Activated CD4-positive, alpha-beta T cell treated with anti-CD3 and anti-CD28 coated beads, Interleukin-2, amount 10 ng/mL, durations not matched to agents 7 days and 5 days (primary cell): ENCODE measurements at regions of chr11 and their contacts with region 1.

Region 1: GRCh38 chr11:65027213-65028067 is at the start of gene SNX15:
- DNase-seq: peak; percentile 96
- H3K4me3 Mint-ChIP-seq: peak within 1 kb of the TSS; percentile 78
- H3K27ac Mint-ChIP-seq: peak within 1 kb of the TSS; percentile 93
- H3K4me1 Mint-ChIP-seq: peaks cover 19% of the 10 kb centered on the region
- H3K27me3 Mint-ChIP-seq: no peaks in the 10 kb centered on the region
- total RNA-seq, gene SNX15: 28.3 to 34.8 TPM

Region 2: GRCh38 chr11:63146581-63146980 is 1880.9 kb before region 1 on chr11:
- CTCF ChIA-PET with region 1: no interaction called
- POLR2A ChIA-PET with region 1: no interaction called
- DNase-seq: no peak
- H3K4me3 Mint-ChIP-seq: no peak overlapping the region
- H3K27ac Mint-ChIP-seq: no peak overlapping the region
- H3K4me1 Mint-ChIP-seq: no peaks in the 10 kb centered on the region
- H3K27me3 Mint-ChIP-seq: peaks cover 11% of the 10 kb centered on the region

Region 3: GRCh38 chr11:63871962-63872799 is 1155.3 kb before region 1 on chr11:
- CTCF ChIA-PET with region 1: no interaction called
- POLR2A ChIA-PET with region 1: no interaction called
- DNase-seq: peak; percentile 67
- H3K4me3 Mint-ChIP-seq: no peak overlapping the region
- H3K27ac Mint-ChIP-seq: peak overlapping the region; percentile 80
- H3K4me1 Mint-ChIP-seq: peaks cover 74% of the 10 kb centered on the region
- H3K27me3 Mint-ChIP-seq: no peaks in the 10 kb centered on the region

Region 4: DNA sequence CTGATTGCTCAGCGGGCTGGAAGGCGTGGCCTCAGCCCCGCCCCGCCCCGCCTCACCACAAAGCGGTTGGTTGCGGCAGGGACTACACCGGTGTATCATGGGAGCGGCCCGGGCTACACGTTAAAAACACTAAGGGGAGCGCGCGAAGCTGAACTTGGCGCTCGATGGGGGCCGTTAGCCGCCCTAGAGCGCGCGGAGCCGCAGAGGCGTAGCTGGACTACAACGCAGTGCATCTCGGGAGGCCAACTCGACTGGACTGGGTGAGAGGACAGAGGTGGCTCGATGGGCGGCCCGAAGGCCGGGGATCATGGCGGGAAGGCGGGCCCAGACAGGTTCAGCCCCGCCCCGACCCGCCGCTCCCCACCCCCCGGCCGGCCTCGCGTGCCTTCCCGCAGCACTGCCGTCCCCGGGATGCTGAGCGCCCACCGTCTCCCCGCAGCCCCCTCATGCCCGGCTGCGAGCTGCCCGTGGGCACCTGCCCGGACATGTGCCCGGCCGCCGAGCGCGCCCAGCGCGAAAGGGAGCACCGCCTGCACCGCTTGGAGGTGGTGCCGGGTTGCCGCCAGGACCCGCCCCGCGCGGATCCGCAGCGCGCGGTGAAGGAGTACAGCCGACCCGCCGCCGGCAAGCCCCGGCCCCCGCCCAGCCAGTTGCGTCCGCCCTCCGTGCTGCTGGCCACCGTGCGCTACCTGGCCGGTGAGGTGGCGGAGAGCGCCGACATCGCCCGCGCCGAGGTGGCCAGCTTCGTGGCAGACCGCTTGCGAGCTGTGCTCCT is 13.6 kb after region 1 on chr11 and contains the start of gene SAC3D1:
- CTCF ChIA-PET with region 1: interaction called, 16 read pairs
- POLR2A ChIA-PET with region 1: no interaction called
- DNase-seq: peak; percentile 95
- H3K4me3 Mint-ChIP-seq: peak within 1 kb of the TSS; percentile 90
- H3K27ac Mint-ChIP-seq: peak within 1 kb of the TSS; percentile 98
- H3K4me1 Mint-ChIP-seq: peaks cover 34% of the 10 kb centered on the region
- H3K27me3 Mint-ChIP-seq: no peaks in the 10 kb centered on the region
- total RNA-seq, gene SAC3D1: 35.9 to 40.5 TPM

Region 5: GRCh38 chr11:65134386-65135253 is 107.2 kb after region 1 on chr11 and contains the start of gene SYVN1:
- CTCF ChIA-PET with region 1: no interaction called
- POLR2A ChIA-PET with region 1: no interaction called
- DNase-seq: peak; percentile 93
- H3K4me3 Mint-ChIP-seq: peak within 1 kb of the TSS; percentile 99
- H3K27ac Mint-ChIP-seq: peak within 1 kb of the TSS; percentile 99
- H3K4me1 Mint-ChIP-seq: peaks cover 27% of the 10 kb centered on the region
- H3K27me3 Mint-ChIP-seq: no peaks in the 10 kb centered on the region
- total RNA-seq, gene SYVN1: 40.5 to 42.2 TPM

Region 6: DNA sequence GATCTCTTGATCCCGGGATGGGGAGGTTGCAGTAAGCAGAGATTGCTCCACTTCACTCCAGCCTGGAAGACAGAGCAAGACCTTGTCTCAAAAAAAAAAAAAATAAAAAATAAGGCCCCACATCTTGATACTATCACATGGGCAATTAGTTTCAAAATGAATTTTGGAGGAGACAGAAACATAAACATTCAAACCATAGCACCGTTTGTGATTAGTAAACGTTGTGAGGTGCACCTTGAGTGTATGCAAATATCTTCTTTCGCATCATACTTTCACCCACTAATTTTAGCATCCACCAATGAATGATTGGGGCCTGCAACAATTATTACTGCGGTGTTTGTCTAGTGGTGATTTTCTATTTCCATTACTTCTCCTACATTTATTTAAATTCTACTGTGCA is 131.6 kb after region 1 on chr11:
- CTCF ChIA-PET with region 1: no interaction called
- POLR2A ChIA-PET with region 1: no interaction called
- DNase-seq: no peak
- H3K4me3 Mint-ChIP-seq: no peak overlapping the region
- H3K27ac Mint-ChIP-seq: no peak overlapping the region
- H3K4me1 Mint-ChIP-seq: peaks cover 9% of the 10 kb centered on the region
- H3K27me3 Mint-ChIP-seq: peaks cover 10% of the 10 kb centered on the region